HCT116 (cell line): ENCODE measurements at regions of chr3 and their contacts with region 1.

Region 1: GRCh38 chr3:150408221-150409102 is at the start of gene TSC22D2:
- DNase-seq: peak; percentile 79
- ATAC-seq: peak; percentile 79
- H3K4me3 ChIP-seq: peak within 1 kb of the TSS; percentile 70 to 85
- H3K27ac ChIP-seq: peak within 1 kb of the TSS; percentile 95
- H3K4me1 ChIP-seq: peaks cover 10 to 42% of the 10 kb centered on the region in 2 experiments
- H3K27me3 ChIP-seq: no peaks in the 10 kb centered on the region
- CTCF ChIP-seq: no peak
- POLR2A ChIP-seq: peak; percentile 53
- RAD21 ChIP-seq: peak; percentile 12; the same call in 1 of the 2 replicates
- total RNA-seq, gene TSC22D2: 20.0 TPM

Region 2: DNA sequence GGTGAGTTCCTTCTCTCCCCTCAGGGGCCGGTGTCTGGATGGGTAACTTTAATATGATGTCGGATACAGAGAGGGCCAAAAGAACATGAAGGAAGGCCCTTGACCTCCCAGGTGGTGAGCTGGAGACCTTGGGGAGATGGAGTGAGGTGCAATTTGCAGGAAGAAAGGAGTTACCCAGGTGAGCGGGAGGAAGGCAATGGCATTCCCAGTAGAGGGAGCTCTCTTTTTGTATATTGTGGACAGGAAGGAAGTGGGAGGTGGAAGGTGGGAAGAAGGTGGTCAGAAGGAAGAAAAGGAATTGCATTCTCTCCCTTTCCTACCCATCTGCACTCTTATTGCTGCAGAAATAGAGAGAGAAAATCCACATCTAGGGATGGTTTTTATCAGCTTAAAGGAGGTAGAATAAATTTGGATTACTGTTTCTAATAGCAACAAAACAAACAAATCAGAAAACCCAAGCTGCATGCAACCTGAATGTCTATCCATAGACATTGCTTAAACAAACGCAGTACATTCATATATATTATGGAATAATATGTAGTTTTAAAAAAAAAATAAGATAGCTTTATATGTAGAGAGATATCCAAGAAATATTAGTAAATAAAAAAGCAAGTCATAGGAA is 169.4 kb before region 1 on chr3:
- CTCF ChIA-PET with region 1: interaction called, 5 read pairs
- POLR2A ChIA-PET with region 1: no interaction called
- RAD21 ChIA-PET with region 1: no interaction called
- intact Hi-C with region 1: loop called (anchors 2 kb)
- DNase-seq: peak; percentile 56
- ATAC-seq: peak; percentile 92
- H3K4me3 ChIP-seq: no peak overlapping the region
- H3K27ac ChIP-seq: peak overlapping the region; percentile 16; the same call in 1 of the 2 replicates
- H3K4me1 ChIP-seq: peaks cover 22 to 37% of the 10 kb centered on the region in 2 experiments
- H3K27me3 ChIP-seq: no peaks in the 10 kb centered on the region
- CTCF ChIP-seq: peak; percentile 80 to 87 (median 81)
- POLR2A ChIP-seq: no peak
- RAD21 ChIP-seq: peak; percentile 91

Region 3: GRCh38 chr3:150286390-150287147 is 121.9 kb before region 1 on chr3:
- CTCF ChIA-PET with region 1: interaction called, 4 read pairs
- POLR2A ChIA-PET with region 1: no interaction called
- RAD21 ChIA-PET with region 1: no interaction called
- intact Hi-C with region 1: loop called (anchors 5 kb)
- DNase-seq: peak; percentile 66
- ATAC-seq: peak; percentile 98
- H3K4me3 ChIP-seq: no peak overlapping the region; a peak in 1 of 4 replicates
- H3K27ac ChIP-seq: no peak overlapping the region
- H3K4me1 ChIP-seq: peaks cover 3 to 15% of the 10 kb centered on the region in 2 experiments; a peak in 3 of 4 replicates
- H3K27me3 ChIP-seq: no peaks in the 10 kb centered on the region
- CTCF ChIP-seq: peak; percentile 59 to 75 (median 62)
- POLR2A ChIP-seq: no peak
- RAD21 ChIP-seq: peak; percentile 68

Region 4: GRCh38 chr3:150309557-150309956 is 98.9 kb before region 1 on chr3:
- CTCF ChIA-PET with region 1: no interaction called
- POLR2A ChIA-PET with region 1: no interaction called
- RAD21 ChIA-PET with region 1: no interaction called
- intact Hi-C with region 1: loop called (anchors 2 kb)
- DNase-seq: no peak
- ATAC-seq: no peak
- H3K4me3 ChIP-seq: no peak overlapping the region
- H3K27ac ChIP-seq: no peak overlapping the region
- H3K4me1 ChIP-seq: peaks cover 12 to 40% of the 10 kb centered on the region in 2 experiments
- H3K27me3 ChIP-seq: no peaks in the 10 kb centered on the region
- CTCF ChIP-seq: no peak
- POLR2A ChIP-seq: no peak
- RAD21 ChIP-seq: no peak

Region 5: DNA sequence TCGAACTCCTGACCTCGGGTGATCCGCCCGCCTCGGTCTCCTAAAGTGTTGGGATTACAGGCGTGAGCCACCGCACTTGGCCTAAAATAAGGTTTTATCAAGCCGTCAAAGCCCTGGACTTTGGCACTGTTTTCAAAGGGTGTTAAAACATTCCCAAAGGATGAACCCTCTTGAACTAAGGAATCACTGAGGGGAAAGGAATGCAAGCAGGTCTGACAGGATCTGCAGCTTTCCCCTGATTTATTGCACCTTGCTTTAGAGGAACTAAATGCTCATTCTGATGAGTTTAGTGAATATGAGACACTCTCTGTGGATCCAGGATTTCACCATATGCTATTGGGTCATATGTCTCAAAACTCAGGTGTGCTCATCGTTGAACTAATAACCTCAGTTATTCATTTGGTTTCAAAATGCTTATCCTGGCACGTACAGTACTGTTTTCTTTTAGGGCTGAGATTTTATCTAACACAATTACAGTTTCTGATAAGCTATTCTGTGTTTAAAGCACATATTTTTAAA is 63.4 kb before region 1 on chr3:
- CTCF ChIA-PET with region 1: no interaction called
- POLR2A ChIA-PET with region 1: interaction called, 7 read pairs
- RAD21 ChIA-PET with region 1: no interaction called
- intact Hi-C with region 1: loop called (anchors 2 kb)
- DNase-seq: peak; percentile 98
- ATAC-seq: peak; percentile 71
- H3K4me3 ChIP-seq: peak overlapping the region in 1 of 2 experiments; percentile 43; a peak in 2 of 4 replicates
- H3K27ac ChIP-seq: peak overlapping the region; percentile 39; the same call in 1 of the 2 replicates
- H3K4me1 ChIP-seq: peaks cover 58 to 75% of the 10 kb centered on the region in 2 experiments
- H3K27me3 ChIP-seq: no peaks in the 10 kb centered on the region
- CTCF ChIP-seq: no peak
- POLR2A ChIP-seq: no peak
- RAD21 ChIP-seq: peak; percentile 51

Region 6: DNA sequence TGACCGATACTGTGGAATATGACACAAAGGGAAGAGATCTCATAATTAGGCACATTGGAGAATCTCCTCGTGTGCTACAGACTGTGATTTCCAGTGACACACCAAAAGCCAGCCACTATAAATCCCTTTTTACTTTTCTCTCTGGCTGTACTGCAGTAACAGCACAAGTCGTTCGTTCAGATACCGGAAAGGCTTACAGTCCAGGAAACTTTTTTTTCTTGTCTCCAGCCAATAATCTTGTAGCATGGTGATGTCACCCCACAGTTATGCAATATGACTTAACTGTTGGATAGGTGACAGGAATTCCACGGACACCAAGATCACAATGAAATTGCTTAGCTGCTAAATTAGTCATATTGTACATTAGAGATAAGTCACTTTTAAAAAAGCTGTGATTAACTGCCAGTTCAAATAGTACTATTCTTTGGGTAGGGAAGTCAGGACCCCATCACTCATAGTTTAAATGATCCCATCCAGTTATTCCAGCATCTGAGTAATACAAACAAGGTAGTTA is 36.7 kb before region 1 on chr3:
- CTCF ChIA-PET with region 1: interaction called, 3 read pairs
- POLR2A ChIA-PET with region 1: interaction called, 6 read pairs
- RAD21 ChIA-PET with region 1: no interaction called
- intact Hi-C with region 1: loop called (anchors 5 kb)
- DNase-seq: peak; percentile 87
- ATAC-seq: peak; percentile 54
- H3K4me3 ChIP-seq: peak overlapping the region; percentile 40 to 57
- H3K27ac ChIP-seq: peak overlapping the region; percentile 66; the same call in 1 of the 2 replicates
- H3K4me1 ChIP-seq: peaks cover 36 to 53% of the 10 kb centered on the region in 2 experiments
- H3K27me3 ChIP-seq: no peaks in the 10 kb centered on the region
- CTCF ChIP-seq: no peak
- POLR2A ChIP-seq: peak; percentile 18
- RAD21 ChIP-seq: 0 out of 2 replicates have a peak, but pooled peaks have one; percentile 7